Psoas muscle (tissue), 8 donors: ENCODE measurements at regions of chr20 and their contacts with region 1.

Region 1: DNA sequence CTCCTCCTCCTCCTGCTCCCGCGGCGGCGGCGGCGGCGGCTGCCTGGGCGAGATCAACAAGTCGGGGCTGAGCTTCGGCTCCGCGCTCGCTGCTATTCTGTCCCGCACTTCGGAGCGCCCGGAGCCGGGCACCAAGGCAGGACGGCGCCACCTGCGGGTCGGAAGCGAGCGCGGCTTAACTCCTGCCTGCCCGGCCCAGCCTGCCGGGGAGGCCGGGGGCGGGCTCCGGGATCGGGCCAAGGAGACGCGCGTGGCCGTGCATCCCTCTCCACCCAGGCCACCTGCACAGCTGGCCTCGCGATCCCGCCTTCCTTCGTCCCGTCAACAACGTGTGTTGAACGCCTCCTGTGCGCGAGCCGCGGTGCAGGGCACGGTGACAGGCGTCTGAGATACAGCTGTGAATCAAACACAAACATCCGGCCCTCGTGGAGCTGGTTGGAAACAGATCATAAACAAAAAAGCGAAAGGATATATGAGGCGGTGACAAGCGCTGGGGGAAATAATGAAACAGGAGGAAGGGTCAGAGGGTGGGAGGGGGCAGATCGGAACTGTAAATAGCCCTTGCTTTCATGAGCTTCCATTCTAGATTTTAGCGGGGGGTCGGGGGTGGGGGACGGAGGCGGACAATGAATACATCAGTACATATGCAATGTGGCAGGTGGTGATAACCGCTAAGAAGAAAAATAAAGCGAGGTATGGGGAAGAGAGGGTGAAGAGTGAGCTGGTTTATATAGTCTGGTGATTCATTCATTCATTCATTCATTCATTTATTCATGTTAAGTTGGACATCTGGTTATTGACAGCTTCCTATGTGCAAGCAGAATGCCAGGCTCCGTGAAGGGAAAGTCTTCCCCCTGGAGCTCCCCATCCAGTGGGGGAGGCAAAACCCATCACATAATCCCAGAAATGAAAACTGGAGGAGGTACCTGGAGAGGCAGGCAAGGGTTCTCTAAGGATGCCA is 2.0 kb upstream of the KCNB1 start:
- DNase-seq: peak; percentile 86 to 91
- ATAC-seq: peak; percentile 83 to 94 (median 90)
- H3K4me3 ChIP-seq: peak overlapping the region; percentile 65
- H3K27ac ChIP-seq: no peak overlapping the region
- H3K4me1 ChIP-seq: peaks cover 10% of the 10 kb centered on the region
- H3K27me3 ChIP-seq: peaks cover 0 to 10% (median 3%) of the 10 kb centered on the region in 3 donors
- CTCF ChIP-seq: peak; percentile 77

Region 2: DNA sequence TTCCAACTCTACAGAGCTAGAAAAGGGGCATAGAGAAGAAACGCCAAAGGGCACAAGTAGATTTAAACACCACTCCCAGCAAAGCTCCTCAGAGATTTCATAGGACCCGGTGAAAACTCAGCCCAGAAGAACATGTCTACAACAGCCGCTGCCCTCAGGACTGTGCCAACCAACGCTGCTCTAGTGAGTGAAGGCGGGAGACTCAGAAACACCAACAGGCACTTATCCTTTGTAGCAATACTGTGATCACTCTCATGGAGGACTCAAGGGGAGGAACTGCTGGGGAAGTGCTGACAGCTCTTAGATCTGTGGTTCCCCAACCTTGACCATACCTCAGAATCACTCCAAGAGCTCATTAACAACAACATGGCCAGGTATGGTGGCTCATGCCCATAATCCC is 335.9 kb before region 1 on chr20:
- intact Hi-C with region 1: no loop called
- DNase-seq: no peak
- ATAC-seq: peak in 2 of 4 donors; percentile 29 to 42
- H3K4me3 ChIP-seq: no peak overlapping the region
- H3K27ac ChIP-seq: no peak overlapping the region
- H3K4me1 ChIP-seq: peaks cover 9% of the 10 kb centered on the region
- H3K27me3 ChIP-seq: no peaks in the 10 kb centered on the region
- CTCF ChIP-seq: no peak

Region 3: GRCh38 chr20:49384437-49385088 is 99.9 kb before region 1 on chr20:
- intact Hi-C with region 1: loop called (anchors 5 to 10 kb)
- DNase-seq: peak; percentile 79 to 82
- ATAC-seq: peak in 3 of 4 donors; percentile 44 to 63 (median 53)
- H3K4me3 ChIP-seq: no peak overlapping the region
- H3K27ac ChIP-seq: no peak overlapping the region
- H3K4me1 ChIP-seq: peaks cover 26% of the 10 kb centered on the region
- H3K27me3 ChIP-seq: no peaks in the 10 kb centered on the region
- CTCF ChIP-seq: peak; percentile 58

Region 4: GRCh38 chr20:49519777-49520359 is 35.4 kb after region 1 on chr20:
- intact Hi-C with region 1: no loop called
- DNase-seq: no peak
- ATAC-seq: no peak
- H3K4me3 ChIP-seq: no peak overlapping the region
- H3K27ac ChIP-seq: no peak overlapping the region
- H3K4me1 ChIP-seq: no peaks in the 10 kb centered on the region
- H3K27me3 ChIP-seq: peaks cover 0 to 3% (median 0%) of the 10 kb centered on the region in 3 donors
- CTCF ChIP-seq: no peak

Region 5: DNA sequence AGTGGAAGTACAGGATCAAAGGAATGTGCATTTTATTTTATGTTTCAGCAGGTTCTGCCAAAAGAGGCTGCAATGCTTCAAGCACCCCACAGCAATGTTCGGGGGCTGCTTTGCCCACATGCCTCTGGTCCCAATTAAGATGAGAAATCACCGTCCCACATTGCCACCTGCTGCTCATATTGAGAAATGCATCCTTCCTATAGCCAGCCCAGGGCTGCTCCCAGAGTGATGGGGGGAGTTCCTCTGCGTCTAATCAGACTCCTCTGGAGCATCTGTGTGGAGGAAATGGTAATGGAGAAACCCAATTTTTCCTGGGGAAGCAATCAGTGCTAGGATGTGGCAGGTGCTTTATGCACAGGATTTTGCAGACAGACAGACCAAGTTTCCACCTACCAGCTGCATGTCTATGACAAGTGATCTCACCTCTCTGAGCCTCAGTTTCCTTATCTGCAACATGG is 49.8 kb after region 1 on chr20:
- intact Hi-C with region 1: loop called (anchors 2 to 5 kb)
- DNase-seq: no peak
- ATAC-seq: peak; percentile 69 to 83 (median 76)
- H3K4me3 ChIP-seq: no peak overlapping the region
- H3K27ac ChIP-seq: no peak overlapping the region
- H3K4me1 ChIP-seq: no peaks in the 10 kb centered on the region
- H3K27me3 ChIP-seq: no peaks in the 10 kb centered on the region
- CTCF ChIP-seq: peak; percentile 77